ENCODE measurements at regions of chr1 and their contacts with region 1.

Region 1: GRCh38 chr1:39196244-39197215 is 8.0 kb upstream of the MACF1 start:
- DNase-seq: no peak
- ATAC-seq: no peak
- H3K4me3 Mint-ChIP-seq: no peak overlapping the region
- H3K27ac Mint-ChIP-seq: 0 out of 2 replicates have a peak overlapping the region, but pooled peaks have one; percentile 49
- H3K4me1 Mint-ChIP-seq: peaks cover 46% of the 10 kb centered on the region
- H3K27me3 Mint-ChIP-seq: no peaks in the 10 kb centered on the region
- CTCF ChIP-seq: no peak

Region 2: GRCh38 chr1:38433084-38433722 is 763.3 kb before region 1 on chr1:
- CTCF ChIA-PET with region 1: no interaction called
- POLR2A ChIA-PET with region 1: no interaction called
- DNase-seq: no peak
- ATAC-seq: peak; percentile 25
- H3K4me3 Mint-ChIP-seq: 0 out of 2 replicates have a peak overlapping the region, but pooled peaks have one; percentile 5
- H3K27ac Mint-ChIP-seq: peak overlapping the region; percentile 33; the same call in 1 of the 2 replicates
- H3K4me1 Mint-ChIP-seq: peaks cover 46% of the 10 kb centered on the region
- H3K27me3 Mint-ChIP-seq: no peaks in the 10 kb centered on the region
- CTCF ChIP-seq: no peak

Region 3: DNA sequence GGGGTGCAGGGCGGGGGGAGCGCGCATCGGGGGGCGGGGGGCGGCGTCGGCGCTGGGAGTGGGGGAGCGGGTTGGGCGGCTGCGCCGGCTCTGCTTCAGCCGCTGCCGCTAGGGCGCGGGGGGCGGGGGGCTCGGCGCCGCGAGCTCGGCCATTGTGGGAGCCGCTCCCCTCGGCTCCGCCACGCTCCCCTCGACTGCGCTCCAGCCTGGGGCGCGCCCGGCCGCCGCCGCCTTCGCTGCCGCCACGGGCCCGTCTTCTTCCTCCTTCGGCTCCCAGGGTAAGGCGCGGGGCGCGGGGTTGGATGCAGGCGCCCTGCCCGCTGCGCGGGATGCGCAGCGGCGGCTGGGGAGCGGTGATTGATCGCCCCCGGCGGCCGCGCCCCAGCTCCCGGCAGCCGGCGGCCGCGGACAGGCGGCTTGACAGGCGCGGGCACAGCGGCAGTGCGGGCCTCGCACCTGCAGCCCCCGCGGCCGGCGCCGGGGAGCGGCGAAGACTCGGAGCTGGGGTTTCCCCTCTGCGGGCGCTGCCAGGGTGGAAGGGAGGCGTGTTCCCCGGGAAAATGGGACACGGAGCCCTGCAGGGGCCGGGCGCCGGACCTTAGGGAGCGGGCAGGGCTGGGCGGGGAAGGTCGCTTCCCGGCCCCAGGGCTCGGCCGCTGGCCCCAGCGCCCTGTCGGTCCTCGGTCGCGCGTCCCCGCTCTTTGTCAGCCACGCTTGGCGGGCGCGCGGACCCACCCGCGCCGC is 115.1 kb before region 1 on chr1:
- CTCF ChIA-PET with region 1: interaction called, 13 read pairs
- POLR2A ChIA-PET with region 1: no interaction called
- DNase-seq: peak; percentile 64
- ATAC-seq: peak; percentile 56
- H3K4me3 Mint-ChIP-seq: no peak overlapping the region
- H3K27ac Mint-ChIP-seq: no peak overlapping the region
- H3K4me1 Mint-ChIP-seq: peaks cover 12% of the 10 kb centered on the region
- H3K27me3 Mint-ChIP-seq: peaks cover 34% of the 10 kb centered on the region
- CTCF ChIP-seq: no peak

Region 4: DNA sequence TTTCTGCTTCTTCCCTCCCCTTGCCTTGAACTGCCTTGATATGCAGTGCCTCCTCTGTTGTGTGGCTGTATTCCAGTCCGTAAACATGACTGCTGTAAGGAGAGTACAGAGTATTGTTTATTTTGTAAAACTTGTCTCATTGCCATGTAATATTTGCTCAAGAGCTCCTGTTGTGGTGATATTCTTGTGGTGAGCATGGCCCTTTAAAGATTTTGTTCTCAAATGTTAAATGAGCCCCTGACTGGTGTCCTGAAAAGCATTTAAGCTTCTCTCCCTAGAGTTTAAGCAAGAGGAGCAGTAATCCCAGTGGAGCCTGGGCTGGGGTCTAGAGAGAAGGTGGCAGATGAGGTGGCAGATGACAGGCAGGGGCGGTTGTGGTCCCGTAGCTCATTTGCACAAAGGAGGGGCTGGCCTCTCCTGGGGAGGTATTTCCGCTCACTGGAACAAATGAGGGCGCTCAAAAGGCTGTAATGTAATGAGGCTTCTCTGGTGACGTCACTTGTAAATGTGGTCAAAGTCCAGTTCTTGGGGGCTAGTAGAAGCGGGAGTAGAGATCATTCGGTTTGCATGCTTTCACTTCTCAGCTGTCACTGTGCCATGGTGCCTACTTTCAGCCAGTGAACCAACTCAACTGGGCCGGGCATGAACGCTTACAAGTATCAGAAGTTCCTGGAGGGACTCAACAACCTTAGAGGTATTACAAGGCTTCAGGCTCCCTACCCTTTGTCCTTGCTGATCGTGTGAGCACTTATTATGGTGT is 38.0 kb before region 1 on chr1:
- CTCF ChIA-PET with region 1: interaction called, 41 read pairs
- POLR2A ChIA-PET with region 1: no interaction called
- DNase-seq: peak; percentile 45
- ATAC-seq: peak; percentile 56
- H3K4me3 Mint-ChIP-seq: peak overlapping the region; percentile 69
- H3K27ac Mint-ChIP-seq: peak overlapping the region; percentile 98
- H3K4me1 Mint-ChIP-seq: peaks cover 73% of the 10 kb centered on the region
- H3K27me3 Mint-ChIP-seq: no peaks in the 10 kb centered on the region
- CTCF ChIP-seq: no peak

Region 5: DNA sequence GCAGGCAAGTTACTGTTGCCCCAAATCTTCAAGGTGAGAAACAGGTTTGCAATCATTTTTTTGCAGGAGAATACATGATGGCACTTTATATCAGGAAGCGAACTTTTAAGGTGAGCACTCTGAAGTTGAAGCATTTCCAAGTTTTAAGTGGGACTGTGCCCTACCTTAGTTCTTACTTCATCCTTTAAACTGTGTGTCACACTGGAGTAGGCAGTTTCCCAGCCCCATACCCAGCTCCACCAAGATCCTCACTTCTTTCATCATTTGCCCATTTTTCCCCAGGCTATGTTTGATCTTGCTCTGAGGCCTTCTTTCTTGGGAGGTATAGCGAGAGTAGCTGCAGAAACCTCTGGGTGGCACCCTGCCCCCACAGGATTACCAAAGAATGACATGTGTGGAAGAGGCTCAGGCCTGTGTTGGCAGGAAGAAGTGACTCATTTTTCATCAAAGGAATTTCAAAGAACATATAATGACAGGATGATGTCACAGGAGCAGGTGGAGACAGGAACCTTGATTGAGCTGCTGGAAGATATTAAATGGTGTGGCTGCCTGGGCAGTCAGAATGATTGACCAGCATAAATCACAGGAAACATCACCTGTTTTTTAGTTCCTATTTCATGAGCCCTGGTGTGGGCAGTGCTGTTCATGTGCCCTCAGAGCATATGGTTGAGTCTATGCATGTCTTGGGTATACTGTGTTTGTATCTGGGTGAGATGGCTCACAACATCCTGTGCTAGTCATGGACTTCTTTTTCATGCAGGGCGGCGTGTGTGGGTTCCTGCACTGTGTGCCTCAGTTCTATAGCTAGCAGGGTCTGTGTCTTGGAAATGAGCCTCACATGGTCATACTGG is 12.8 kb before region 1 on chr1:
- CTCF ChIA-PET with region 1: interaction called, 30 read pairs
- POLR2A ChIA-PET with region 1: no interaction called
- DNase-seq: peak; percentile 52
- ATAC-seq: peak; percentile 94
- H3K4me3 Mint-ChIP-seq: no peak overlapping the region
- H3K27ac Mint-ChIP-seq: peak overlapping the region; percentile 65
- H3K4me1 Mint-ChIP-seq: peaks cover 46% of the 10 kb centered on the region
- H3K27me3 Mint-ChIP-seq: no peaks in the 10 kb centered on the region
- CTCF ChIP-seq: no peak

Region 6: DNA sequence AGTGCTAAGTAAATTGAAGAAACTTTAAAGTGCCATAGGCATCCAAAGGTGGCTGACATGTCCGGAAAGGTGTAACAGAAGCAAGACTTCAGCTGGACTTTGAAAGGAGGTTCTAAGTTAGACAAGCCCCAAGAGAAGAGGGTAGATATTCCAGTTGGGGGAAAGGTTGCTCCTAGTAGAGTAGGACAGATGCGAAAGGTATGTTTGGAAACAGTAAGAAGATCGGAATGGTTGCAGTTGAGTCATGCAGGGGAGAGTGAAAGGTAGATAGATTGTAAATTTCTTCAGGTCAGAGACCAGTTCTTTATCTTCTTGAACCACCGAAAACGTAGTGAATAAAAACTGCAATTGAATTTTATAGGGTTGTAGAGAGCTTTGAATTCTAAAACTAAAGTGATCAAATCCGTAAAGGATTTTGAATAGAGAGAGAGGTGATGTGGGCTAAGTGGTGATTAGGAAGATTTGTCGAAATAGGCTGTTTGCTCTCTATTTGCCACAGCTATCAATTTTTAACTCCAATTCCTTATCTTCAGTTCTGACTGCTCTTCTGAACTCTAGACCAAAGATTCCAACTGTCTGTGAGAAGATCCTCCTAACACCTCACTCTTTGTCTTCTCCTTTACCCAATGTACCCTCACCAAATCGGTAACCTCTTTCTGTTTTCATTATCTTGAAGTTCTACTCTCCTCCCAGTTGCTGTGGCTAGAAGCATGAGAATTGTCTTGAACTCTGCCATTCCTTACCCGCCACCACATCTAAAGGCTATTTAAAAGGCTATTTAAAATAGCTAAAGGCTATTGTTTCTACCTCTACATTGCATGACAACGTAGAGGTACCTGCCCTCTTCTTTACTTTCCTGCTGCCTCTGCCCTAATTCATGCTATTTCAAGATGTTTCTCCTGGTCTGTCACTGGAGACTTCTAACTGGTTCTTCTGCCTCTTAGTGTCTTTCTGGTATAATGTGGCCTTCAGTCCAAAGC is 24.7 kb after region 1 on chr1:
- CTCF ChIA-PET with region 1: interaction called, 55 read pairs
- POLR2A ChIA-PET with region 1: no interaction called
- DNase-seq: no peak
- ATAC-seq: peak; percentile 86
- H3K4me3 Mint-ChIP-seq: peak overlapping the region; percentile 17; the same call in 1 of the 2 replicates
- H3K27ac Mint-ChIP-seq: peak overlapping the region; percentile 83
- H3K4me1 Mint-ChIP-seq: peaks cover 38% of the 10 kb centered on the region
- H3K27me3 Mint-ChIP-seq: no peaks in the 10 kb centered on the region
- CTCF ChIP-seq: no peak

Region 7: GRCh38 chr1:39238476-39238875 is 41.9 kb after region 1 on chr1:
- CTCF ChIA-PET with region 1: interaction called, 13 read pairs
- POLR2A ChIA-PET with region 1: no interaction called
- DNase-seq: no peak
- ATAC-seq: no peak
- H3K4me3 Mint-ChIP-seq: no peak overlapping the region
- H3K27ac Mint-ChIP-seq: 0 out of 2 replicates have a peak overlapping the region, but pooled peaks have one; percentile 28
- H3K4me1 Mint-ChIP-seq: no peaks in the 10 kb centered on the region
- H3K27me3 Mint-ChIP-seq: no peaks in the 10 kb centered on the region
- CTCF ChIP-seq: no peak

Region 8: GRCh38 chr1:39268112-39268581 is 71.6 kb after region 1 on chr1:
- CTCF ChIA-PET with region 1: interaction called, 24 read pairs
- POLR2A ChIA-PET with region 1: no interaction called
- DNase-seq: peak; percentile 24
- ATAC-seq: peak; percentile 14
- H3K4me3 Mint-ChIP-seq: peak overlapping the region; percentile 66
- H3K27ac Mint-ChIP-seq: peak overlapping the region; percentile 98
- H3K4me1 Mint-ChIP-seq: peaks cover 73% of the 10 kb centered on the region
- H3K27me3 Mint-ChIP-seq: no peaks in the 10 kb centered on the region
- CTCF ChIP-seq: no peak

Measured in WTC11 (cell line).